ENCODE measurements at regions of chr9 and their contacts with region 1.

Region 1: GRCh38 chr9:6681147-6681956 is 35.8 kb upstream of the GLDC start:
- DNase-seq: peak; percentile 85
- ATAC-seq: peak; percentile 74
- H3K4me3 Mint-ChIP-seq: peak overlapping the region; percentile 97
- H3K27ac Mint-ChIP-seq: peak overlapping the region; percentile 100
- H3K4me1 Mint-ChIP-seq: peaks cover 44% of the 10 kb centered on the region
- H3K27me3 Mint-ChIP-seq: no peaks in the 10 kb centered on the region
- CTCF ChIP-seq: no peak

Region 2: GRCh38 chr9:4792572-4793458 is 1888.5 kb before region 1 on chr9 and contains the start of gene RCL1:
- CTCF ChIA-PET with region 1: no interaction called
- POLR2A ChIA-PET with region 1: interaction called, 4 read pairs
- intact Hi-C with region 1: loop called (anchors 10 kb)
- DNase-seq: peak; percentile 97
- ATAC-seq: peak; percentile 93
- H3K4me3 Mint-ChIP-seq: peak within 1 kb of the TSS; percentile 97
- H3K27ac Mint-ChIP-seq: peak within 1 kb of the TSS; percentile 96
- H3K4me1 Mint-ChIP-seq: peaks cover 40% of the 10 kb centered on the region
- H3K27me3 Mint-ChIP-seq: peaks cover 2% of the 10 kb centered on the region
- CTCF ChIP-seq: no peak
- total RNA-seq, gene RCL1: 23.9 and 26.0 TPM in 2 replicates

Region 3: DNA sequence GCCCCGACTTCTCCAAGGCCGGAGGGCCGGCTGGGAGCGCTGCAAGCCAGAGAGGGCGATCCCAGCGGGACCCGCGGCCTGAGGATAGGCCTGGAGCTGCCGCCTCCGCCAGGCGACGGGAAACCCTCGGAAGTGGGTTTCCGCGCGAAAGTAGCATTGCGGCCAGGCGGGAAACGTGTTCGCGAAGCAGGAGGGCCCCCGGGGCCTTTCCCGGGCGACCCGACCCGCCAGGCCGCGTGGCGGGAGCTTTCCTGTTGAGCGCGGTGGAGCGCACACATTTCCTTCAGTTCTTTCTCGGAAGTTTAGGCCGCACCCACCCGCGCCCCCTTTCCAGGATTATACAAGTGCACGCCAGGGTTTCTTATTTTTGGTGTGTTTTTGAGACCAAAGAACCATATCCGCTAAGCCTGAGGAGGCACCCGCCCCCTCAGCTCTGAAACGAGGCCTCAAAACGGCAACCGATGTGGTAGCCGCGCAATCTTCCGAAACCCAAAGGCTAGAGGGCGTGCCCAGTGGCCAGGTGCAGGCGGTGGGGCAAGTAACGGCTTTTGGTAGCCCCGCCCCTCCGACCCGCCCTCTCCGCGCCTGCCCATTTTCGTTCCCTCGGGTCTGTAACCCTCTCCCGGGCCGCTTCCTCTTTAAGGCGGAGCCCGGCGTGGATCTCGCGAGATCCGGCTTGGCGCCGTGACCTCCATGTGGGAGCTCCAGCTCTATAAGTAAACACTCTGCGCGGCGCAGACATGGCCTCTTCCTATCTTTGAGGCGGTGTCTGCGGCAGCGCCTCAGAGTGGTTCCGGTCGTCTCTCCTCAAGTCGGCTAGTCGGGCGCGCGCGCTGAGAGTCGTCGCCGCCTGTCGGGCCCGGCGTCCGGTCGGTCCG is 268.6 kb before region 1 on chr9 and contains the start of gene UHRF2:
- CTCF ChIA-PET with region 1: no interaction called
- POLR2A ChIA-PET with region 1: interaction called, 59 read pairs
- intact Hi-C with region 1: loop called (anchors 1 kb)
- DNase-seq: peak; percentile 95
- ATAC-seq: peak; percentile 87
- H3K4me3 Mint-ChIP-seq: peak within 1 kb of the TSS; percentile 82
- H3K27ac Mint-ChIP-seq: peak within 1 kb of the TSS; percentile 96
- H3K4me1 Mint-ChIP-seq: peaks cover 61% of the 10 kb centered on the region
- H3K27me3 Mint-ChIP-seq: no peaks in the 10 kb centered on the region
- CTCF ChIP-seq: no peak
- total RNA-seq, gene UHRF2: 81.1 and 114 TPM in 2 replicates

Region 4: DNA sequence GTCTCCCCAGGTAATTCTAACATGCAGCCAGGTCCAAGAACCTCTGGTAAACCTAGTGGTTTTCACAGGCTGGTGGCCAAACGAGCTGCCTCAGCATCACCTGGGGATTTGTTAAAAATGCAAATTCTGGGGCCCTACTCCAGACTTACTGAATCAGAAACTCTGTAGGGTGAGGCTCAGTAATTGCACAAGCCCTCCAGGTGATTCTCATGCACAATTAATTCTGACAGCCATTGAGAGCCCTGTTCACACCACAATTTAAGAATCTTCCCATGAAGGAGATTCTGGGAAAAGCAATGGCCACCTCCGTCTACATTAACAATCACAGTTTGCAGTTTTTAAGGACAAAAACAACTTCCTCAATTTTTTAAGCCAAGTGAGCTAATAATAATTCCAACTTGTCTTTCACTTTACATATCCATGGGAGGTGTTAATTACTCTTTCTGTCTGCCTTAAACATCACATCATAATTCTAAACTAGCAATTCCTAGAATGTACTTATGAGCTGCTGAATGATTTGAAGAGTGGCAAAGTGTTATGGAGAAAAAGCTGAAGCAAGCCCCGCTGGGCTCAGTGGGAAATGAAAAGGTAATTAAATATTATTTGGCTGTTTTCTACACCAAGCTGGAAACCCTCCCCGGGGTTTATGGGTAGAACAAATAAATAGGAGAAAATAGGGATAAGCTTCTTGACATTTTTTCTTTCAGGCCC is 105.9 kb before region 1 on chr9:
- CTCF ChIA-PET with region 1: no interaction called
- POLR2A ChIA-PET with region 1: interaction called, 10 read pairs
- intact Hi-C with region 1: no loop called
- DNase-seq: no peak
- ATAC-seq: peak; percentile 96
- H3K4me3 Mint-ChIP-seq: peak overlapping the region; percentile 8
- H3K27ac Mint-ChIP-seq: no peak overlapping the region
- H3K4me1 Mint-ChIP-seq: peaks cover 37% of the 10 kb centered on the region
- H3K27me3 Mint-ChIP-seq: peaks cover 19% of the 10 kb centered on the region
- CTCF ChIP-seq: no peak

Region 5: GRCh38 chr9:6611865-6612264 is 69.5 kb before region 1 on chr9:
- CTCF ChIA-PET with region 1: no interaction called
- POLR2A ChIA-PET with region 1: no interaction called
- intact Hi-C with region 1: no loop called
- DNase-seq: no peak
- ATAC-seq: no peak
- H3K4me3 Mint-ChIP-seq: no peak overlapping the region
- H3K27ac Mint-ChIP-seq: no peak overlapping the region
- H3K4me1 Mint-ChIP-seq: no peaks in the 10 kb centered on the region
- H3K27me3 Mint-ChIP-seq: no peaks in the 10 kb centered on the region
- CTCF ChIP-seq: no peak

Region 6: GRCh38 chr9:6632516-6633183 is 48.7 kb before region 1 on chr9:
- CTCF ChIA-PET with region 1: no interaction called
- POLR2A ChIA-PET with region 1: interaction called, 12 read pairs
- intact Hi-C with region 1: no loop called
- DNase-seq: peak; percentile 29
- ATAC-seq: peak; percentile 88
- H3K4me3 Mint-ChIP-seq: peak overlapping the region; percentile 6
- H3K27ac Mint-ChIP-seq: no peak overlapping the region
- H3K4me1 Mint-ChIP-seq: peaks cover 33% of the 10 kb centered on the region
- H3K27me3 Mint-ChIP-seq: peaks cover 3% of the 10 kb centered on the region
- CTCF ChIP-seq: no peak

Region 7: GRCh38 chr9:6703898-6704639 is 22.7 kb after region 1 on chr9:
- CTCF ChIA-PET with region 1: no interaction called
- POLR2A ChIA-PET with region 1: interaction called, 77 read pairs
- intact Hi-C with region 1: loop called (anchors 1 kb)
- DNase-seq: peak; percentile 71
- ATAC-seq: peak; percentile 84
- H3K4me3 Mint-ChIP-seq: peak overlapping the region; percentile 93
- H3K27ac Mint-ChIP-seq: peak overlapping the region; percentile 98
- H3K4me1 Mint-ChIP-seq: peaks cover 22% of the 10 kb centered on the region
- H3K27me3 Mint-ChIP-seq: no peaks in the 10 kb centered on the region
- CTCF ChIP-seq: no peak

Region 8: GRCh38 chr9:6818320-6818922 is 137.1 kb after region 1 on chr9:
- CTCF ChIA-PET with region 1: no interaction called
- POLR2A ChIA-PET with region 1: no interaction called
- intact Hi-C with region 1: loop called (anchors 5 kb)
- DNase-seq: no peak
- ATAC-seq: no peak
- H3K4me3 Mint-ChIP-seq: no peak overlapping the region
- H3K27ac Mint-ChIP-seq: peak overlapping the region; percentile 39
- H3K4me1 Mint-ChIP-seq: peaks cover 49% of the 10 kb centered on the region
- H3K27me3 Mint-ChIP-seq: no peaks in the 10 kb centered on the region
- CTCF ChIP-seq: no peak

Region 9: DNA sequence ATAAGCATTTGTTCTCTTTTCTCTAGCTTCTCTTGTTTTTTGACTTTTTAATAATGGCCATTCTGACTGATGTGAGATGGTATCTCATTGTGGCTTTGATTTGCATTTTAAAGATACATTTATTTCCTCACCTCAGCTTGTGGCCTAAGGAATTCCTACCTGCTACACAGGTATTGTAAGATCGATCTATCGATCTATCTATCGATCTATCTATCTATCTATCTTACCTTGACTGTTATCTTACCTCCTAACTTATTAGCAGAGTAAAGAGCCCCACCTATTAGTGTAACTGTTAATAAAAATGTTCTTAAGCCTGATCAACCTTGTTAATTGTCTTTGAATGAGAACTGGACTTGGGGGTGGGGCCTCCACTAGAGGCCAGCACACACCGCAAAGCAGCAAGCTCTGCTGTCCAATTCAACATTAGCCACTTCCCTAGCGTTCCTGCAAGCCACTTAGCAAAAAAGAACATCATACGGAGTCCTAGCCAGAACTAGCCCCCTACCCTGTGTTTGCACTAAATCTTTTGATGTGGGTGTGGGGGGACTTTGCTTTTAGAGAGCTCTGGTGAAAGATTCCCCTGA is 592.1 kb after region 1 on chr9:
- CTCF ChIA-PET with region 1: no interaction called
- POLR2A ChIA-PET with region 1: no interaction called
- intact Hi-C with region 1: no loop called
- DNase-seq: no peak
- ATAC-seq: no peak
- H3K4me3 Mint-ChIP-seq: no peak overlapping the region
- H3K27ac Mint-ChIP-seq: no peak overlapping the region
- H3K4me1 Mint-ChIP-seq: no peaks in the 10 kb centered on the region
- H3K27me3 Mint-ChIP-seq: peaks cover 7% of the 10 kb centered on the region
- CTCF ChIP-seq: no peak

Measured in activated B cell treated with CpG ODN at 0.5 μM for 24 hours (primary cell).